ENCODE measurements at regions of chr6 and their contacts with region 1.

Region 1: GRCh38 chr6:2765166-2765895 is at the start of gene WRNIP1:
- DNase-seq: peak; percentile 95 to 98 (median 98)
- H3K4me3 ChIP-seq: peak within 1 kb of the TSS; percentile 63 to 79
- H3K4me3 Mint-ChIP-seq: peak within 1 kb of the TSS; percentile 93 to 97 (median 95)
- H3K27ac ChIP-seq: peak within 1 kb of the TSS; percentile 90
- H3K27ac Mint-ChIP-seq: peak within 1 kb of the TSS; percentile 98 to 100 (median 99)
- H3K4me1 ChIP-seq: peaks cover 45% of the 10 kb centered on the region
- H3K4me1 Mint-ChIP-seq: peaks cover 33 to 63% (median 43%) of the 10 kb centered on the region in 4 donors
- H3K27me3 ChIP-seq: no peaks in the 10 kb centered on the region
- H3K27me3 Mint-ChIP-seq: peaks cover 0 to 1% of the 10 kb centered on the region in 2 donors
- total RNA-seq, gene WRNIP1: 41.1 to 42.7 TPM

Region 2: GRCh38 chr6:2738373-2738979 is 26.9 kb before region 1 on chr6:
- CTCF ChIA-PET with region 1: interaction called, 15 read pairs
- POLR2A ChIA-PET with region 1: no interaction called
- intact Hi-C with region 1: loop called (anchors 1 kb)
- DNase-seq: peak; percentile 41 to 65 (median 47)
- H3K4me3 ChIP-seq: no peak overlapping the region
- H3K4me3 Mint-ChIP-seq: no peak overlapping the region
- H3K27ac ChIP-seq: no peak overlapping the region
- H3K27ac Mint-ChIP-seq: no peak overlapping the region
- H3K4me1 ChIP-seq: no peaks in the 10 kb centered on the region
- H3K4me1 Mint-ChIP-seq: no peaks in the 10 kb centered on the region
- H3K27me3 ChIP-seq: no peaks in the 10 kb centered on the region
- H3K27me3 Mint-ChIP-seq: peaks cover 1 to 9% of the 10 kb centered on the region in 2 donors

Region 3: DNA sequence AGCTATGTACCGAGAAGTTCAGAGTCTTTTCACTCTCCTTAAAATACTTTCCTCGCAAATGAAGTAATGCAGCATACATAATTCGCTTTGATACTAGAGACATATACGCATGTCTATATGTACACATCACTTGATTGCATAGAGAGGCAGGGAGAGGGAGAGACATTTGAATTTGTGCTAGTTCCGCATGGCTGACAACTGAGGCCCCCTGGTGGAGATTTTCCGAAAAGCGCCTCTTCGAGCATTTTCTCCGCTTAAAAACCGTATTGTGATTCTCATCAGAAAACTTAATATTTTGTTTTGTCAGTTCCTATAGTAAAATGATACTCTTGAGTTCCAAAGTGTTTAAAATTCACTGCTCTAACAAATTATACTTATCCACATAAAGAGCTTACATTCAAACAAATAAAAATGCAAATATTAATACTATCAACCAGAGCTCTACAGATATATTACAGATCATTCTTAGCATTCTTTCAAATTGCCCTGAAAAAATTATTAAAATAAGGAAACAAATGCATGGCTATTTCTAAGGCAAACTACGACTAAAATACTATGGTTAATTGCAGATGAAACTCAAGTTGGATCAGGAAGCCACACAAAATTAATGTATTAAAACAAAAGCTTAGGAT is 15.2 kb before region 1 on chr6:
- CTCF ChIA-PET with region 1: interaction called, 50 read pairs
- POLR2A ChIA-PET with region 1: interaction called, 6 read pairs
- intact Hi-C with region 1: loop called (anchors 1 kb)
- DNase-seq: peak; percentile 52 to 63 (median 56)
- H3K4me3 ChIP-seq: no peak overlapping the region
- H3K4me3 Mint-ChIP-seq: no peak overlapping the region
- H3K27ac ChIP-seq: no peak overlapping the region
- H3K27ac Mint-ChIP-seq: peak overlapping the region in 1 of 7 donors; percentile 35
- H3K4me1 ChIP-seq: no peaks in the 10 kb centered on the region
- H3K4me1 Mint-ChIP-seq: peaks cover 0 to 2% (median under 1%) of the 10 kb centered on the region in 4 donors
- H3K27me3 ChIP-seq: peaks cover 7% of the 10 kb centered on the region
- H3K27me3 Mint-ChIP-seq: peaks cover 13 to 21% of the 10 kb centered on the region in 2 donors

Region 4: GRCh38 chr6:2900821-2901644 is 135.7 kb after region 1 on chr6:
- CTCF ChIA-PET with region 1: no interaction called
- POLR2A ChIA-PET with region 1: interaction called, 3 read pairs
- intact Hi-C with region 1: loop called (anchors 2 kb)
- DNase-seq: peak in 1 of 5 donors; percentile 22
- H3K4me3 ChIP-seq: peak overlapping the region; percentile 42 to 92
- H3K4me3 Mint-ChIP-seq: peak overlapping the region; percentile 99 to 100 (median 99)
- H3K27ac ChIP-seq: peak overlapping the region; percentile 82
- H3K27ac Mint-ChIP-seq: peak overlapping the region; percentile 91 to 99 (median 98)
- H3K4me1 ChIP-seq: peaks cover 57% of the 10 kb centered on the region
- H3K4me1 Mint-ChIP-seq: peaks cover 44 to 66% (median 54%) of the 10 kb centered on the region in 4 donors
- H3K27me3 ChIP-seq: no peaks in the 10 kb centered on the region
- H3K27me3 Mint-ChIP-seq: no peaks in the 10 kb centered on the region

Region 5: GRCh38 chr6:3023663-3024483 is 258.5 kb after region 1 on chr6:
- CTCF ChIA-PET with region 1: no interaction called
- POLR2A ChIA-PET with region 1: interaction called, 3 read pairs
- intact Hi-C with region 1: loop called (anchors 1 kb)
- DNase-seq: peak; percentile 73 to 91 (median 78)
- H3K4me3 ChIP-seq: peak overlapping the region; percentile 67 to 72
- H3K4me3 Mint-ChIP-seq: peak overlapping the region; percentile 87 to 97 (median 92)
- H3K27ac ChIP-seq: peak overlapping the region; percentile 61
- H3K27ac Mint-ChIP-seq: peak overlapping the region; percentile 91 to 97 (median 92)
- H3K4me1 ChIP-seq: peaks cover 70% of the 10 kb centered on the region
- H3K4me1 Mint-ChIP-seq: peaks cover 34 to 69% (median 54%) of the 10 kb centered on the region in 4 donors
- H3K27me3 ChIP-seq: no peaks in the 10 kb centered on the region
- H3K27me3 Mint-ChIP-seq: no peaks in the 10 kb centered on the region

Region 6: GRCh38 chr6:3258720-3259490 is 493.6 kb after region 1 on chr6 and contains the start of gene PSMG4:
- CTCF ChIA-PET with region 1: no interaction called
- POLR2A ChIA-PET with region 1: interaction called, 3 read pairs
- intact Hi-C with region 1: loop called (anchors 10 kb)
- DNase-seq: peak; percentile 87 to 92 (median 88)
- H3K4me3 ChIP-seq: peak within 1 kb of the TSS; percentile 44 to 67
- H3K4me3 Mint-ChIP-seq: peak within 1 kb of the TSS; percentile 93 to 99 (median 96)
- H3K27ac ChIP-seq: peak within 1 kb of the TSS; percentile 70
- H3K27ac Mint-ChIP-seq: peak within 1 kb of the TSS; percentile 92 to 99 (median 95)
- H3K4me1 ChIP-seq: peaks cover 45% of the 10 kb centered on the region
- H3K4me1 Mint-ChIP-seq: peaks cover 21 to 49% (median 37%) of the 10 kb centered on the region in 4 donors
- H3K27me3 ChIP-seq: no peaks in the 10 kb centered on the region
- H3K27me3 Mint-ChIP-seq: no peaks in the 10 kb centered on the region
- total RNA-seq, gene PSMG4: 41.0 to 41.6 TPM